Sigmoid colon (tissue), 7 donors: ENCODE measurements at regions of chr4 and their contacts with region 1.

Region 1: DNA sequence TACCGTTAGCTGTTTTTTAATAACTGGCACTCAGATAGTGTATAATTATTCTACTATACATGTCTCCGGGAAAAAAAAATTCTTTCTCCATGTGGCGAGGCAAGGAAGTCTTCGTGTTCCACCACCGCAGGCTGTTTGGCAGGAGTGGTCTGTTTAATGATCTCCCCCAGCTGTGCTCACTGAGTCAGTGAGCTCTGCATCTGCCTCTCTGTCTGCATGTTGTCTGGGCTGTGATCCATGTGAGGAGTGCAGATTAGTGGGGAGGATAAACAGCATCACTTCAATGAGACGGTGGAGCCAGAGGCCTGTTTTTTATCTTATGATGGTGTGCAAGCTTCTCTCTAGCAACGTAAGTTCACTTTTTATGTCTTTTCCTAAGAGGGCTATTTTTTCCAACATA is 69.8 kb downstream of the RPS3A start:
- DNase-seq: peak; percentile 95
- H3K4me3 ChIP-seq: no peak overlapping the region
- H3K27ac ChIP-seq: peak overlapping the region; percentile 67 to 83 (median 73)
- H3K4me1 ChIP-seq: peaks cover 0 to 76% (median 61%) of the 10 kb centered on the region in 4 donors
- H3K27me3 ChIP-seq: no peaks in the 10 kb centered on the region
- CTCF ChIP-seq: no peak
- EP300 ChIP-seq: peak in 3 of 4 donors; percentile 10 to 48 (median 35)
- POLR2A ChIP-seq: no peak

Region 2: GRCh38 chr4:151015459-151016347 is 153.5 kb before region 1 on chr4:
- intact Hi-C with region 1: loop called (anchors 10 kb)
- DNase-seq: peak; percentile 83
- H3K4me3 ChIP-seq: peak overlapping the region; percentile 90 to 99 (median 96)
- H3K27ac ChIP-seq: peak overlapping the region; percentile 86 to 91 (median 89)
- H3K4me1 ChIP-seq: peaks cover 0 to 19% (median 9%) of the 10 kb centered on the region in 4 donors
- H3K27me3 ChIP-seq: no peaks in the 10 kb centered on the region
- CTCF ChIP-seq: no peak
- EP300 ChIP-seq: no peak
- POLR2A ChIP-seq: peak; percentile 13 to 35

Region 3: DNA sequence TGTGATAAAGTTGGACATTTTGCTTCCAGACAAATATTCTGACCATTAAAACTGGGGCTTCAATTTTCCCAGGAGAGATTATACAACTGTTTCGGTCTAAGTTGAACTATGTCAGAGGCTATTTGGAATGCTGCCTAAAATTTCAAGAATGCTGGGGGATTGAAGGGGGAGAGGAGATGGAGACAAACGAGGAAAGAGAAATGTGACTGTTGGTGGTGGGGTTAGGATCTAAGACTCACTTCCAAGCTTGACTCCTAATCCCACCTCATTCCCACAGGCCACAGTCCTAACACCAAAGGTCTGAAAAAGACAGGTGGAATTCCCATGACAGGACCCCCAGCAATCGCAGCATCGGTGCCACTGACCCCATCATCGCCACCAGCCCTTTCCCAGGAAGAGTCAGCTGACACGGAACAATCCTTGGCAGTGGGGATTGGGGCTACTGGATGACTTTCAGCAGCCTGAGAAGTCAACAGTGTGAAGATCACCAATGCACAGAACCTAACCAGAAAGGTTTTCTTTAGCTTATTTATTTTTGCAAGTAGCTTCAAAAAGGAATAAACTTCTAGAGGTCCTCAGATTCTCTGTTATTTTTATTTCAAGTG is 33.7 kb after region 1 on chr4:
- intact Hi-C with region 1: no loop called
- DNase-seq: no peak
- H3K4me3 ChIP-seq: no peak overlapping the region
- H3K27ac ChIP-seq: peak overlapping the region; percentile 33 to 64 (median 48)
- H3K4me1 ChIP-seq: peaks cover 0 to 69% (median 61%) of the 10 kb centered on the region in 4 donors
- H3K27me3 ChIP-seq: no peaks in the 10 kb centered on the region
- CTCF ChIP-seq: no peak
- EP300 ChIP-seq: no peak
- POLR2A ChIP-seq: no peak

Region 4: GRCh38 chr4:151227731-151228130 is 58.5 kb after region 1 on chr4:
- intact Hi-C with region 1: loop called (anchors 5 kb)
- DNase-seq: peak; percentile 85
- H3K4me3 ChIP-seq: peak overlapping the region; percentile 13 to 39 (median 26)
- H3K27ac ChIP-seq: peak overlapping the region; percentile 61 to 80 (median 66)
- H3K4me1 ChIP-seq: peaks cover 0 to 53% (median 28%) of the 10 kb centered on the region in 4 donors
- H3K27me3 ChIP-seq: no peaks in the 10 kb centered on the region
- CTCF ChIP-seq: no peak
- EP300 ChIP-seq: no peak
- POLR2A ChIP-seq: no peak

Region 5: DNA sequence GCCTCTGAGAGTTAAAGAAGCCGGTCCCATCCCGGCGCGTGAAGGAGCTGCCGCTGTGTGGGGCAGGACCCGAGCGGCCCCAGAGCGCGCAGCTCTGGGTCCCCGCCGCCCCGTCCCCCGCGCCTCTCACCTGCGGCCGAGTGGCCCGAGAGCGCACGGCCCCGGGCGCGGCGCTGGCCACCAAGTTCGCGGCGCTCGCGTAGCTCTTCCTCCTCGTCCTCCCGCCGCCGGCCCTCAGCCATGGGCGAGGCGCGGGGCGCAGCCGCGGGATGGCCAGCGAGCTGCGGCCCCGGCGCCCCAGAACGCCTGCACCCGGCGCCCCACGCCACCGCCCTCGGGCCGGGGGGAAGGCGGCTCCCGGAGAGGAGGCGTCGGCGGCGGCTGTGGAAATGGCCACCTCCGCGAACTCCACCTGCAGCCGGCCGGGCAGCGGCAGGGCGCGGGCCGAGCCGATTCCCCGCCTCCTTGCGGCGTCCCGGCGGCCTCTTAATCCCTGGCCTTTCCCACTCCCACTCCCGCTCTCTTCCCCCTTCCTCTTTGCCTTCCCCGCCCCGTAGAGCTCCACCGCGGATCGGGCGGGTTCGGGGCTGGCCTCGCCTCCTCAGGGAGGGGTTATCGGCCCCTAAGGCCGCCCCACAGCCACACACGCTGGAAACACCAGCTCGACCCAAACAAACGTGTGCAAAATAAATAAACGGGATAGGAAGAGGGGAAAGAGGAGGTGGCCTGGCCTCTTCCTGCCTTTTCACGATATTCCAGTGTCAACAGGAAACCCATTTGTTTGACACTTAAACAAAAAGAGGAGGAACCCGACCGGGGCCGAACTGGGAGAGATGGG is 156.1 kb after region 1 on chr4 and contains the start of gene SH3D19:
- intact Hi-C with region 1: loop called (anchors 2 kb)
- DNase-seq: peak; percentile 89
- H3K4me3 ChIP-seq: peak within 1 kb of the TSS; percentile 52 to 80 (median 68)
- H3K27ac ChIP-seq: peak within 1 kb of the TSS; percentile 89 to 95 (median 92)
- H3K4me1 ChIP-seq: peaks cover 0 to 42% (median 33%) of the 10 kb centered on the region in 4 donors
- H3K27me3 ChIP-seq: no peaks in the 10 kb centered on the region
- CTCF ChIP-seq: no peak
- EP300 ChIP-seq: no peak
- POLR2A ChIP-seq: peak; percentile 35 to 68
- total RNA-seq, gene SH3D19: 105 to 195 (median 128) TPM

Region 6: DNA sequence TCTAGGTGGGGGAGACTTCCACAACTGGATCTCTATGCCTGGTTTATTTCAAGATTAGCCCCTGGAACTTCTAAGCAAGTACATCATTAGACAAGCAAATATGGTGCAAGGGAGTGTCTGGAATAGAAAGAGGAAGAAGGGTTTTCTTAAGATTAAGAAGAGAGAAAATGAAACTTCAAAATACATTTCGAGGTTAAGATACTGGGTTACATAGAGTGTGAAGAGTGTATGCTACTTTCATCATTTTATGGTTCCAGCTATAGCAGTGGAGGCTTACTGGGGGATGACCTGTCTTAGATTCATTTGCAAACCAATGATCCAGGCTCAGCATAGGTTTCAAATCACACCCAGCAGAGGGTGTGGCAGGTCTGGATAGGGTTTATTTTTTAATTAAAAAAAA is 736.0 kb after region 1 on chr4:
- intact Hi-C with region 1: no loop called
- DNase-seq: no peak
- H3K4me3 ChIP-seq: no peak overlapping the region
- H3K27ac ChIP-seq: no peak overlapping the region
- H3K4me1 ChIP-seq: peaks cover 0 to 10% (median 3%) of the 10 kb centered on the region in 4 donors
- H3K27me3 ChIP-seq: no peaks in the 10 kb centered on the region
- CTCF ChIP-seq: no peak
- EP300 ChIP-seq: no peak
- POLR2A ChIP-seq: no peak